Heart right ventricle (tissue), 16 donors: ENCODE measurements at regions of chr7 and their contacts with region 1.

Region 1: DNA sequence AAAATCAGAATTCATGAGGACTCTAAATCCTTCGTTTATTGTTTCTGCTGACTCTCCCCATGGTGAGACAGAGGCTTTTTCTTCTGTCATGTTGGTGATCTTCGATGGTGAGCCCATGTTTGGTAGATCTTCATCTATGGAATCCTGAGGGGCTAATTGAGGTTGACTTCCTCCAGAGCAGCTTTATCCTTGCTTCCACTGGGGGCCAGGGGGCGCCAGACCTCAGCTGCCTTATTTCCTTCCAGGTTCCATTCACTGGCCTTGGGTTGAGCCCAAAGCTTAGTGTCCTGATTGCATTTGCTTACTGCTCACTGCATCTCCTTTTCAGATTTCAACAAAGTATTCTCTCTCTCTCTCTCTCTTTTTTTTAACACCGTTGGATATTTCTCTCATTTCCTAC is 80.7 kb downstream of the GCC1 start:
- DNase-seq: peak in 1 of 2 donors; percentile 16
- ATAC-seq: no peak
- H3K4me3 ChIP-seq: no peak overlapping the region
- H3K27ac ChIP-seq: no peak overlapping the region
- H3K4me1 ChIP-seq: no peaks in the 10 kb centered on the region
- H3K27me3 ChIP-seq: peaks cover 0 to 29% (median 11%) of the 10 kb centered on the region in 7 donors
- CTCF ChIP-seq: peak in 7 of 9 donors; percentile 8 to 44 (median 34)

Region 2: DNA sequence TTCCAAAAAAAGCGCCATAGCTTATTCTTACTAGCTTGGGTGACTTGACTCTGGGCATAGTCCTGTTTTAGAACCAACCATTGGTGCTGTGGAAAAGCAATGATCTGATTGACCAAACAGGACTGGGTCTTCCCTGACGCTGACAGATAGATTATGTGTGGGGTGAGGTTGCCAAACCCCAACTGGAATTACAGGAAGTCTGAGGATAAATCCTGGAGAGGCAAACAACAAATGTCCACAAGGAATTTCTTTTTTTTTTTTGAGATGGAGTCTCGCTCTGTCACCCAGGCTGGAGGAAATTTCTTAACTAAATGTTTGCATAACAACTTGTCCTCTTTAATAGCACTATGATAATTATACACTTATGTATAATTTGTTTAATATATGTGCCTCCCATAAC is 61.5 kb after region 1 on chr7:
- intact Hi-C with region 1: loop called in 1 of 10 experiments (anchors 10 kb)
- DNase-seq: no peak
- ATAC-seq: no peak
- H3K4me3 ChIP-seq: no peak overlapping the region
- H3K27ac ChIP-seq: no peak overlapping the region
- H3K4me1 ChIP-seq: no peaks in the 10 kb centered on the region
- H3K27me3 ChIP-seq: no peaks in the 10 kb centered on the region
- CTCF ChIP-seq: no peak